Posterior vena cava (tissue), 2 donors: ENCODE measurements at regions of chr14 and their contacts with region 1.

Region 1: DNA sequence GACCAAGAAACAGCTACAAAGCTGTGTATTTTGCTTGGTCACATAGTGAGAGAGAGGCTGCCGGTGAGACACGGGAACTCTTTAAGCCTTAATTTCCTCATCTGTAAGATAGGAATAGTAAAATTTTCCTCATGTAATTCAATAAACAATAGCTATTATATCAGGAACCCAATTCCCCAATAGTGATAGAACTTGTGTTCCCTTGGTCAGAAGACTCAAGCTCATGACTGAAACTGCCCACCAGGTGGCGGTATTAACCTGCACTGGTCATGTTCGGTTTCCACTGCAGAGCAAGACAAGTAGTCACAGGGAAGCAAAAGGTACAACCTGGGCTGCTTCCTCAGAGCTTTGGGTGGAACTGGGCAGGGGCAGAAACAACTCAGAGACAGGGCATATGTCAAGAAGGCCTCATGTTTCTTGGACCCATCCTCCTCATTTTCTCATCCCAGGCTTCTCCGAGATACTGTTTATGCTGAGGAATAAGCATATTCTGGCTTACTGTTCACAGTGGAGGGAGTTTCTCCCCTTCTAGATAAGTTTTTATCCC is 4.2 kb upstream of the AJUBA start:
- DNase-seq: peak; percentile 94

Region 2: DNA sequence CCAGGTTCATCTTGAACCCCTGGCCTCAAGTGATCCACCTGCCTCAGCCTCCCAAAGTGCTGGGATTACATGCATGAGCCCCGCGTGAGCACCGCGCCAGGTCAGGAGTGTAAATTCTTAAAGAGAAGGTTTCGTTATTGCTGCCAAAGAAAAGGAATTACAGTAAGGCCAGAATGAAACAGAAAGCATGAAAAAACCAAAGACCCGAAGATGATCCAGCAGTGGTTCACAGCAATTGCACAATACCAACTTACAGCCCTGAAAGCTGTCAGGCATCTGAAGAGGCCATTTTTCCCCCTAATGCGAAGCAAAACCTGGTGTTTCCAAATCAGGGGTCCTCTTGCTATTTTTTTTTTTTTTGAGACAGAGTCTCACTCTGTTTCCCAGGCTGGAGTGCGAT is 78.0 kb before region 1 on chr14:
- intact Hi-C with region 1: no loop called
- DNase-seq: no peak

Region 3: DNA sequence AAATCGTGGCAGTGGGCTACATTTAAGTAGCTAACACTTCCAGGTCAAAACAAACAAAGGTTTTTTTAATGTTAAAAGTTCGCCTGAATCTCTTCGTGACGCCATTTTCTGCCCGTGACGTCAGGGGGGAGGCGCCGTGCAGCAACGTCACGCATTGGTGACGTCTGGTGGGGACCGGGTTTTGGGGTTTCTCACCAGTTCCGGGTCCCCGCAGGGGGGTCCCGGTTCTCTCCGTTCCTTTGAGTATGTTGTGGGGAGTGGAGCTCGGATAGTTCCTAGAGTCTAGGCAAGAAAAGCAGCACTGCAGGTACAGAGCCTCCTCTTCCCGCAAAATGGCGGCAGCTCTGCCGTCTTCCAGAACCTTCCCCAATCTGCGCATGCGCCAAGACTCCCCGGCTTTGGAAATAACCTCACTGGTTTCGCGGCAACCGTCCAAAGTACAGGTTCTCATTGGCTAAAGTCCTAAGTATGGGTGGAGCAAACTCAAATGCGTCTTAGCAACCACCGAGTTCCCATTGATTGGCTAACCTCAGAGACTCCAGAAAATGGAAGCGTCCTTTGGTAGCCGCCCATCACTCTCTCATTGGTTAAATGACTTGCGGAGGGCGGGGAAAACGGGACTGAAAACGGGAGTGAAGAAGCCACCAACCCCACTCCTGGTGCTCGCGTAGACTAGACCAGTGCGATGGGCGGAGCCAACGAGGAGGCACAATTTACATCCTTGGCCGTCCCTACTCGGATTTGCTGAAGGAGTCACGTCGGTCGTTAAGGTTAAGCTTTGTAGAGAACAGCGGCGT is 67.6 kb before region 1 on chr14 and contains the start of gene RBM23:
- intact Hi-C with region 1: no loop called
- DNase-seq: peak; percentile 100
- total RNA-seq, gene RBM23: 53.8 to 62.2 TPM

Region 4: DNA sequence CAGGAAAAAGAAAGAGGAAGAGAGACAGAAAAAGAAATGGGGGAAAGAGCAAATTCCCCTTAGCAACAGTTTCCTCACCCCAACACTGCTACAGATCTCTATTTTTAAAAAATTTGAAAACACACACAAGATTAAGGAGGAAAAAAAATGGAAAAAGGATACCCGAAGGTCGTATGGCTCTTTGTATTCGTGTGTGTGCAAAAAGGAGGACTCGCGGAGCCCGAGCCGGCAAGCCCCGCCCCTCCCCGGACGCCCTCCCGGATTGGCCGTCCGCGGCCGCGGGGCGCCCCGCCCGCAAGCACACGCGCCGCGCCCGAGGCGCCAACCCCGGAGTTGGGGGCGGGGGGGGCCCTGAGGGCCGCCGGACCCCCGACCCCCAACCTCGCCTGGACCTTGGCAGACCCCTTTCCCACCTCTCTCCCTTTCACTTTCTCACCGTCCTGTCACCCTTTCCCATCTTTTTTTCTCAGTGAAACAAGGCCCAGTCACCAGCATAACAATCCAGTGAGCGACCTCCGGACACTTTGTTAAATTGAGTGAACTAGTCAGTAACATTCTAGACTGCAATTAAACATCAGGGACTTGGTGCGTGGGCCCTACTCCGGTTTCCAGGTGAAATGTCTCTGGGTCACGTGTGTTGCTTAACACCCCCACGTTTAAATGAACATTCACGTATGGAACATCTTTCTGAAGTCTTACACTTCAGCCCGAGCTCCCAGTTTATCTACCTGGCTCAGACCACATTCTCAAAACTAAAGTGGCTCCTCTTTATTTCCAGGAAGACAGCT is 23.6 kb after region 1 on chr14 and contains the start of gene C14orf93:
- intact Hi-C with region 1: loop called in 1 of 2 experiments (anchors 1 kb)
- DNase-seq: peak; percentile 94
- total RNA-seq, gene C14orf93: 3.8 to 5.7 TPM

Region 5: GRCh38 chr14:23057757-23058653 is 71.4 kb after region 1 on chr14:
- intact Hi-C with region 1: loop called (anchors 2 to 5 kb)
- DNase-seq: peak; percentile 96